Posterior vena cava (tissue), 2 donors: ENCODE measurements at regions of chr16 and their contacts with region 1.

Region 1: GRCh38 chr16:52101246-52101645 is 445.7 kb downstream of the TOX3 start:
- DNase-seq: no peak

Region 2: GRCh38 chr16:50954469-50954868 is 1146.8 kb before region 1 on chr16:
- intact Hi-C with region 1: loop called in 1 of 2 experiments (anchors 5 kb)
- DNase-seq: no peak

Region 3: DNA sequence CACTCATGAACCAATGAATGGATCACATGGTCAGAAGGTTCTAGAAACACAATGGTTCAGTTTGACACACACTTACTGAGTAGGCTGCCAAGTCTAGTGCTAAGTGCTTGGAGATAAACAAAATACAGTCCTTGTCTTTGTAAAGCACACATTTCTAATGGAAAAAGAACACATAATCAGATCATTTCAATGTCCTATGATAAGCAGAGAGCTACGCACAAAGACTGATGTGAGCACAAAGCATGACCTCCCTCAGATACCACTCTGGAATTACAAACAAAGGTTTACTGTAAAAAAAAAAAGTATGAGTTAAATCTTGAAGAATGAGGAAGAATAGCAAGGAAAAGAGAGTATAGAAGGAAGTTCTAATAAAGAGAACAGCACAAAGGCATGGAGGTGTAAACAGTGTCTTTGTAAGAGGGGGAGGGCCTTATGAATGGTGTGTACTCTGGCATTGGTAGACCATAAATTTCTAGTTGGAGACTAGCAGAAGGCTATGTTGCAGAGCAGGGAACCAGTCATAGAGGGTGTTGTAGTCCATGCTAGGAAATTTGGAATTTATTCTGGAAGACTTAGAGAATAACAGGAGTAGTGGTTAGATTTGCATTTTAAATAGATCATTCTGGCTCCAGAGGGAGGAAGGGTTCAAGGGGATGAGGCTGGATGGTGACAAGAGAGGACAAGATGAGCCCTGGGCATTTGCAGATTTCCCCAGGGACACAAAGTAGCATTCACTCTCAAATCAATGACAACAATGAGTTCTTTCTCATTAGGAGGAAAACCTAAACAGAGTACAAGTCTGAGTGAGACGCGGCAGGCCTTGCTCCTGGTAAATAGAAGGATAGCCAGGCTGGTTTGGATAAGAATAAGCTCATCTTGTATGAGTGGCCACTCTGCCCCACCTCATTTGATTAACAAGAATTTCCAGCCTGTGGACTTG is 22.3 kb before region 1 on chr16:
- intact Hi-C with region 1: no loop called
- DNase-seq: no peak

Region 4: DNA sequence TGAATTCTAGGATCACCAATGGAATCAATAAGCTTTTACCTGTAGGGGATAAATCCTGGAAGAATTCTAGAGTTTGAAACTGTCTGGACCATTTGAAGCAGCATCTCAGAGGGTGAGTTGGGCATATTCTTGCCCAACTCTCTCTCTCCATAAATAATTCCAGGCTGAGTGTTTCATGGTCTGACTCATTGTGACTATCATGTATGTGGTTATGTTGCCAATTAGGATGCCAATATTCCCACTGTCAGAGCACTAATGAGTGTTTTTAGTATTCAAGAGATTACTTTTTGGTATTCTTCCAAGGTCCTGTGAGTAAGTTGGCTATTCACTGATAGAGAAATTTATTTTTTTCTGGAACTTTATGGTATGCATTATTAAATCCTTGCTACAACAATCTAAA is 11.2 kb before region 1 on chr16:
- intact Hi-C with region 1: no loop called
- DNase-seq: no peak

Region 5: DNA sequence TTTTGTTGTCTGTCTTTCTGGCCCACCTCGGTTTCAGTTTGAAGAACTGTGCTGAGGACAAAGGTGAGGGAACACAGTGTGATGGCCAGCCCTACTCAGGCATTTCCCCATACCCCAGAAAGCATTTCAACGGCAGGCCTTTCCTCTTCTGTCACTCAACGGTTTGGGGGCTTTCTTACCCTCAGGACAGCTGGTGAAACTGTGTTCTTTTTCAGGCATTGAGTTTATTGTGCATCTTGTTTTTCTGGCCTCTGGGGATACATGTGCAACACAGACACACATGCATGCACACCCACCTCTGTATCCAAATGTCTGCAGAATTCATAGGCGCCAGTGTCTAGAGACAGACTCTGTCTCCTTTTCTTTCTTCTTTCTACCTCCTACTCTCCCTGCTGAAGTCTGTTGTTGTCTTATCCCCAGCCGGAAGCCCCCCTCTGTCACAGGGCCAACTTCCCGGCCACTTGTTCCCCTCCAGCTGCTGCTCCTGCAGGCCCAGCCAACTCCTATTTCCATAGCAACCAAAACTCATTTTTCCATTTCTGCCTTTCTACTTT is 970.6 kb after region 1 on chr16:
- intact Hi-C with region 1: no loop called
- DNase-seq: peak; percentile 86